Panc1 (cell line): ENCODE measurements at regions of chr10 and their contacts with region 1.

Region 1: DNA sequence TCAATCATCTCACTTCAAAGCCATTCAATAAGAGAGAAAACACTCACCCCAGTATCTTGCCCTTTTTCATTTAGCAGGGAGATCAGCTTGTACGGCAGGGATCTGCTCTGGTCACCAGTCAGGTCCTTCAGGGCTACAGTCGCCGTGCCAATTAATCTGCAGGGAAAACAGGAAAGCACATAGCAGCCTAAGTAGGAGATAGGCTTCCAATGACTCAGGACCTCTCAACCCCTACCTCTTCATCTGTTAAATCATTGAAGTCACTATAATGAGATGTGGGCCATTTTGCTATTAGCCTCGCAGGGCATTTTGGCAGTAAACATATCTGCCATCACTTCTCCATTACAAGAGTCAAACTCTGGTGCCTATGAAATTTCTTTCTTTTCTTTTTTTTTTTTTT is 50.8 kb downstream of the MYOF start:
- DNase-seq: no peak
- ATAC-seq: peak; percentile 24; the same call in 1 of the 2 replicates
- H3K4me3 ChIP-seq: no peak overlapping the region
- H3K27ac ChIP-seq: peak overlapping the region; percentile 100; the same call in 1 of the 2 replicates
- H3K4me1 ChIP-seq: peaks cover 44% of the 10 kb centered on the region
- H3K27me3 ChIP-seq: no peaks in the 10 kb centered on the region
- CTCF ChIP-seq: no peak

Region 2: DNA sequence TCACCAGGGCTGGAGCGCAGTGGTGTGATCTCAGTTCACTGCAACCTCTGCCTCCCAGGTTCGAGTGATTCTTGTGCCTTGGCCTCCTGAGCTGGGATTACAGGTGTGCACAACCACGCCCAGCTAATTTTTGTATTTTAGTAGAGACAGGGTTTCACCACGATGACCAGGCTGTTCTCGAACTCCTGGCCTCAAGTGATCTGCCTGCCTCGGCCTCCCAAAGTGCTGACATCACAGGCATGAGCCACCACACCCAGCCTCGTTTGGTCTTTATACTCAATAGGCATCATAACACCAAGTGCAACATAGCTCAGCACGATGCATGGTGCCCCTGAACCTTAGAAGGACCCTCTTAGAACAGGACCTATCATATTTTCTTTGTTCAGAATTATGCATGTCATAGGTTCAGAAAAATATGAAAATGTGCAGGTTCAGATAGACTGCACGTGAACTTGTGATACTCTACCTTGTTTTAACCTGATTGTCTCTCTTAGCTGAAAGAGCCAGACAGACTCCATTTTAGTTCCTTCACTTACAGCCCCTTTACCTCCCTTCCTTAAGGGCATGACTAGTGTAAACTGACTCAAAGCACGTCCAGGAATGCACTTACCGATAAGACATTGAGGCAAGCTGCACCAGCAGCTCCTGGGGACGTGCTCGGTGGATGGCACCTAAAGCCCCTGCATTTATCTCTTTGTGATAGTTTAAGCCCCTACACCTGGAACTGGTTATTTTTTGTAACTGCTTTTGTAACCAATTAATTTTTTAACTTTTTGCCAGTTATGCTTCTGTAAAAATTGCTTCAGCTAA is 15.6 kb after region 1 on chr10:
- CTCF ChIA-PET with region 1: interaction called, 3 read pairs
- POLR2A ChIA-PET with region 1: interaction called, 12 read pairs
- in situ Hi-C with region 1: no loop called
- intact Hi-C with region 1: no loop called
- DNase-seq: no peak
- ATAC-seq: no peak
- H3K4me3 ChIP-seq: no peak overlapping the region
- H3K27ac ChIP-seq: peak overlapping the region; percentile 100
- H3K4me1 ChIP-seq: peaks cover 70% of the 10 kb centered on the region
- H3K27me3 ChIP-seq: no peaks in the 10 kb centered on the region
- CTCF ChIP-seq: no peak